Caco-2 (cell line): ENCODE measurements at regions of chr14 and their contacts with region 1.

Region 1: GRCh38 chr14:69726761-69727511 is 40.0 kb upstream of the SRSF5 start:
- DNase-seq: peak; percentile 67 to 85
- H3K4me3 ChIP-seq: peak overlapping the region; percentile 45
- H3K4me3 Mint-ChIP-seq: peak overlapping the region; percentile 67
- H3K27ac Mint-ChIP-seq: no peak overlapping the region
- H3K4me1 ChIP-seq: 0 out of 2 replicates have a peak, but pooled peaks cover 4% of the 10 kb centered on the region
- H3K4me1 Mint-ChIP-seq: no peaks in the 10 kb centered on the region
- H3K27me3 ChIP-seq: no peaks in the 10 kb centered on the region
- H3K27me3 Mint-ChIP-seq: no peaks in the 10 kb centered on the region
- CTCF ChIP-seq: peak; percentile 94 to 97

Region 2: GRCh38 chr14:69580009-69580577 is 146.8 kb before region 1 on chr14:
- CTCF ChIA-PET with region 1: interaction called, 5 read pairs
- POLR2A ChIA-PET with region 1: no interaction called
- intact Hi-C with region 1: loop called (anchors 1 kb)
- DNase-seq: peak; percentile 71 to 73
- H3K4me3 ChIP-seq: no peak overlapping the region
- H3K4me3 Mint-ChIP-seq: no peak overlapping the region
- H3K27ac Mint-ChIP-seq: no peak overlapping the region
- H3K4me1 ChIP-seq: no peaks in the 10 kb centered on the region; the same call in 1 of the 2 replicates
- H3K4me1 Mint-ChIP-seq: peaks cover 16% of the 10 kb centered on the region
- H3K27me3 ChIP-seq: no peaks in the 10 kb centered on the region
- H3K27me3 Mint-ChIP-seq: no peaks in the 10 kb centered on the region
- CTCF ChIP-seq: peak; percentile 37 to 77

Region 3: GRCh38 chr14:69611201-69612011 is 115.5 kb before region 1 on chr14 and contains the start of gene SUSD6:
- CTCF ChIA-PET with region 1: interaction called, 10 read pairs
- POLR2A ChIA-PET with region 1: no interaction called
- intact Hi-C with region 1: no loop called
- DNase-seq: peak; percentile 88 to 90
- H3K4me3 ChIP-seq: peak within 1 kb of the TSS; percentile 67
- H3K4me3 Mint-ChIP-seq: peak within 1 kb of the TSS; percentile 91
- H3K27ac Mint-ChIP-seq: peak within 1 kb of the TSS; percentile 78
- H3K4me1 ChIP-seq: peaks cover 36% of the 10 kb centered on the region
- H3K4me1 Mint-ChIP-seq: peaks cover 52% of the 10 kb centered on the region
- H3K27me3 ChIP-seq: no peaks in the 10 kb centered on the region
- H3K27me3 Mint-ChIP-seq: no peaks in the 10 kb centered on the region
- CTCF ChIP-seq: no peak
- total RNA-seq, gene SUSD6: 16.6 and 21.5 TPM in 2 replicates

Region 4: GRCh38 chr14:69766984-69767368 is 40.0 kb after region 1 on chr14 and contains the start of gene SRSF5:
- CTCF ChIA-PET with region 1: no interaction called
- POLR2A ChIA-PET with region 1: interaction called, 4 read pairs
- intact Hi-C with region 1: loop called (anchors 2 kb)
- DNase-seq: peak; percentile 96 to 97
- H3K4me3 ChIP-seq: peak within 1 kb of the TSS; percentile 85
- H3K4me3 Mint-ChIP-seq: peak within 1 kb of the TSS; percentile 97
- H3K27ac Mint-ChIP-seq: peak within 1 kb of the TSS; percentile 99
- H3K4me1 ChIP-seq: peaks cover 19% of the 10 kb centered on the region
- H3K4me1 Mint-ChIP-seq: peaks cover 19% of the 10 kb centered on the region
- H3K27me3 ChIP-seq: no peaks in the 10 kb centered on the region
- H3K27me3 Mint-ChIP-seq: no peaks in the 10 kb centered on the region
- CTCF ChIP-seq: no peak
- total RNA-seq, gene SRSF5: 264 and 310 TPM in 2 replicates

Region 5: DNA sequence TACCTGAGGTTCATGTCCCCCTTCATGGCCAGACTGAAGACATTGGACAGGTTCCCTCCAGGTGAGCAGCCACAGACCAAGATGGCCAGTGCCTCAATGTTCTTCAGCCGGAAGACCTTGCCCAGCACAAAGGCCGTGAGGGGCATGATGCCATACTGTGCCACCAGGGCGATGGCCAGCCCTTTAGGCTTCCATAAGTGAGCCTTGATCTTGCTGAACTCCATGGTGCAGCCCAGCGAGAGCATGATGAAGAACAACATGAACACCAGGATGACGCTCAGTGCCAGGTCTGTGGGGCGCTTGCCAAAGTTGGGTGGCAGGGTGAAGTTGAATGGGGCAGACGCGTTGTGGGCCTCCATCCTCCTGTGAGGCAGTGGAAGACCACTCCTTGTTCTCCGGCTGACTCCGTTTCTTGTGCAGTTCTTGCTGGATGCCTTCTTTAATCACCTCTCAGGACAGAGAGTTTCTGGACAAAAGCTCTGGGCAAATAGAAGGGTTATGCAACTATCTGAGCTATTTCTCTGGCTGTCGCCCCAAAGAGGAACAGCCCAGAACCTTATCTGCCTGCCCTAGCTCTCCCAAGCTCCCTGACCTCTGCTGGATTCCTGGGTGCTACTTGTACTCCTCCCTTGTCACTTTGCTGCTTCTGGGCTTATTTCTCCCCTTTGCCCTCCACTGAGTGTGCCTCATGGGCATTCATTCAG is 70.0 kb after region 1 on chr14 and contains the start of gene SLC10A1:
- CTCF ChIA-PET with region 1: interaction called, 16 read pairs
- POLR2A ChIA-PET with region 1: no interaction called
- intact Hi-C with region 1: no loop called
- DNase-seq: peak; percentile 46 to 56
- H3K4me3 ChIP-seq: no peak within 1 kb of the TSS
- H3K4me3 Mint-ChIP-seq: peak within 1 kb of the TSS; percentile 16
- H3K27ac Mint-ChIP-seq: peak within 1 kb of the TSS; percentile 79
- H3K4me1 ChIP-seq: peaks cover 24% of the 10 kb centered on the region
- H3K4me1 Mint-ChIP-seq: peaks cover 21% of the 10 kb centered on the region
- H3K27me3 ChIP-seq: no peaks in the 10 kb centered on the region
- H3K27me3 Mint-ChIP-seq: no peaks in the 10 kb centered on the region
- CTCF ChIP-seq: no peak
- total RNA-seq, gene SLC10A1: 2.6 and 3.8 TPM in 2 replicates

Region 6: GRCh38 chr14:69812714-69813113 is 85.8 kb after region 1 on chr14:
- CTCF ChIA-PET with region 1: interaction called, 6 read pairs
- POLR2A ChIA-PET with region 1: no interaction called
- intact Hi-C with region 1: loop called (anchors 1 kb)
- DNase-seq: peak; percentile 65 to 73
- H3K4me3 ChIP-seq: no peak overlapping the region
- H3K4me3 Mint-ChIP-seq: no peak overlapping the region
- H3K27ac Mint-ChIP-seq: no peak overlapping the region
- H3K4me1 ChIP-seq: peaks cover 70% of the 10 kb centered on the region
- H3K4me1 Mint-ChIP-seq: peaks cover 26% of the 10 kb centered on the region
- H3K27me3 ChIP-seq: no peaks in the 10 kb centered on the region
- H3K27me3 Mint-ChIP-seq: no peaks in the 10 kb centered on the region
- CTCF ChIP-seq: peak; percentile 24 to 38

Region 7: DNA sequence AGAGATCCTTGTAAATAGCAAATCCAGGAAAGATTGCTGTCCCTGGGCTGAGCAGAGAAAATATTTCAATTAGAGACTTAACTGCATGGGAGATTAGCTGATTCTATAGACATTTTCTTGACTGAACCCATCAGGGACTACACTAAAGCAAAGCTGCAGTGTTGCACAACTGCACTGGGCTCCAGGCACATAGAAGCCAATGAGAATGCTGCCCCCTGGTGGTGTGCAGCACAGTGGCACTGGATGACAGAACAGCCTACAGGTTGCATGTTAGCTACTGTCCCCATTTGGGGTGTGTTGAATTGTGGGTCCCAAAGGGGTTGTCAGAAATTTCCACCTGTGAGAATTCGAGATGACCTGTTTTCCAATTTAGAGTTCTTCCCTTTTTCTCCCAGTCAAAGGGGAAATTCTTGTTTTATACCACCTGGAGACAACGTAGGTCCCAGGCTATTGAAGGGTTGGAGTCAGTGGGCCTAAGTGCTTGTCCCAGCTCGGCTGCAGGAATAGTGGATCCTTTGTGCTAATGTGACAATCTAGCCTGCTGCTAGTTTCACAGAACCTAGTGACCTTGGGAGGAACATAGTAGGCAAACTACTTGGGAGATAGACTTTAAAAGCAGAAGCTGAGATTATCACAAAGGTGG is 347.1 kb after region 1 on chr14:
- CTCF ChIA-PET with region 1: interaction called, 8 read pairs
- POLR2A ChIA-PET with region 1: no interaction called
- intact Hi-C with region 1: loop called (anchors 2 kb)
- DNase-seq: peak; percentile 82 to 87
- H3K4me3 ChIP-seq: no peak overlapping the region
- H3K4me3 Mint-ChIP-seq: no peak overlapping the region
- H3K27ac Mint-ChIP-seq: no peak overlapping the region
- H3K4me1 ChIP-seq: peaks cover 13% of the 10 kb centered on the region
- H3K4me1 Mint-ChIP-seq: peaks cover 18% of the 10 kb centered on the region
- H3K27me3 ChIP-seq: no peaks in the 10 kb centered on the region
- H3K27me3 Mint-ChIP-seq: no peaks in the 10 kb centered on the region
- CTCF ChIP-seq: peak; percentile 88 to 96